Posterior vena cava (tissue), 2 donors: ENCODE measurements at regions of chr1 and their contacts with region 1.

Region 1: GRCh38 chr1:62953633-62954032 is 169.7 kb downstream of the ATG4C start:
- DNase-seq: no peak

Region 2: GRCh38 chr1:62725255-62725654 is 228.4 kb before region 1 on chr1:
- intact Hi-C with region 1: no loop called
- DNase-seq: no peak

Region 3: DNA sequence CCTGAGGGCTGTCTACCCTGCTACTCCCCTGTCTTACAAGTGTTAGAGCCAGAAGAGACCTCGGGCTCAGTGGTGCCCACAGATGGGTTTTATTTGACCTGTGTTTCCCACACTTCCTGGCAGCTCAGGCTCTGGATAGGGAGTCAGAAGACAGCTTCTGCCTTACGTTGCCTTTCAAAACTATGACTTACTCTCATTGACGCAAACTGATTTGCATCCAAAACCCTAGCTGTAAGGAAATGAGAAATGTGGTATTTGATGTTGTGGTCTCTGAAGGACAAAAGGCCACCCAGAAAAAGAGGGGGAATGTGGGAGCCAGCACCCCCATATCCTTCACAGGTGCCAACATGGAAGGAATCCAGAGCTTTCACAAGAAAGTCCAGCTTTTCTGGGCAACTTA is 10.5 kb after region 1 on chr1:
- intact Hi-C with region 1: loop called in 1 of 2 experiments (anchors 1 kb)
- DNase-seq: no peak

Region 4: GRCh38 chr1:63557365-63557987 is 603.8 kb after region 1 on chr1:
- intact Hi-C with region 1: no loop called
- DNase-seq: no peak